ENCODE measurements at regions of chr4 and their contacts with region 1.

Region 1: DNA sequence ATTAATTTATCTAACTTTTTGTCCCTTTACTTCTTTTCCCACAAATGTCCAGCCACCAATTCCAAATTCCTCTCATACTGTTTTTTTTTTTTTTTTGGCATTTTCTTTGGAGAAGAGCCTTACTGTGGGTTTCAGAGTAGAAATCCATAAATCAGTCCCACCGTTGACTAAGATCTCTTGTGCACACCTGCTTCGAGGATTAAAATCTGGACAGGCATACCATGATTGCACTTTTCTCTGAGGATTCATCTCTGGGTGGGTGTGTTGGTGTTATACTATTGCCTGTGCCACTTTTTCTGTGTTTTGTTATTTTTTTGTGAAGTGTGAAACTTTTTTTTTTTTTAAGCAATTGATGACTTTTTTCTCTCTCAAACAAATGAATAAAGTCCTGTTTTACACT is 13.2 kb downstream of the PRDM8 start:
- DNase-seq: no peak
- ATAC-seq: no peak
- H3K4me3 ChIP-seq: no peak overlapping the region
- H3K27ac ChIP-seq: no peak overlapping the region
- H3K4me1 ChIP-seq: no peaks in the 10 kb centered on the region
- H3K27me3 ChIP-seq: no peaks in the 10 kb centered on the region
- CTCF ChIP-seq: no peak

Region 2: DNA sequence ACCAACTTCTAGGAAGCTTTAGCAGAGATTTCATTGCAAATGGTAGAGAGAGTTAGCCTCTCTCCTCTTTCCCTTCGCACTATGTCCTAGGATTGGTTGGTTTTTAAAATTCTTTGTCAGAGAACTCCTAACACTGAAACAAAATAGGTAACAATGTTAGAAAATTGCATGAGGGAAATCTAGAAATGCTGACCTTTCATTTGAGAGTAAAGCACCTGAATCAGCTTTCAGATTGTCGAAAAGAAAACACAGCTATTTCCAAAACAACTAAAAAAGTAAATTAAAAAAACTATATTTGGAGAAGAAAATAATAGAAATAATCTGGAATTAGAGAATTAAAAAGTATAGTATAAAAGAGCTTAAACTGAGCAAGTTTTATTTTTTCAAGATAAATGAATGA is 694.4 kb before region 1 on chr4:
- CTCF ChIA-PET with region 1: no interaction called
- POLR2A ChIA-PET with region 1: interaction called, 11 read pairs
- in situ Hi-C with region 1: no loop called
- intact Hi-C with region 1: no loop called
- DNase-seq: no peak
- ATAC-seq: no peak
- H3K4me3 ChIP-seq: no peak overlapping the region
- H3K27ac ChIP-seq: no peak overlapping the region
- H3K4me1 ChIP-seq: no peaks in the 10 kb centered on the region
- H3K27me3 ChIP-seq: no peaks in the 10 kb centered on the region
- CTCF ChIP-seq: no peak

Region 3: DNA sequence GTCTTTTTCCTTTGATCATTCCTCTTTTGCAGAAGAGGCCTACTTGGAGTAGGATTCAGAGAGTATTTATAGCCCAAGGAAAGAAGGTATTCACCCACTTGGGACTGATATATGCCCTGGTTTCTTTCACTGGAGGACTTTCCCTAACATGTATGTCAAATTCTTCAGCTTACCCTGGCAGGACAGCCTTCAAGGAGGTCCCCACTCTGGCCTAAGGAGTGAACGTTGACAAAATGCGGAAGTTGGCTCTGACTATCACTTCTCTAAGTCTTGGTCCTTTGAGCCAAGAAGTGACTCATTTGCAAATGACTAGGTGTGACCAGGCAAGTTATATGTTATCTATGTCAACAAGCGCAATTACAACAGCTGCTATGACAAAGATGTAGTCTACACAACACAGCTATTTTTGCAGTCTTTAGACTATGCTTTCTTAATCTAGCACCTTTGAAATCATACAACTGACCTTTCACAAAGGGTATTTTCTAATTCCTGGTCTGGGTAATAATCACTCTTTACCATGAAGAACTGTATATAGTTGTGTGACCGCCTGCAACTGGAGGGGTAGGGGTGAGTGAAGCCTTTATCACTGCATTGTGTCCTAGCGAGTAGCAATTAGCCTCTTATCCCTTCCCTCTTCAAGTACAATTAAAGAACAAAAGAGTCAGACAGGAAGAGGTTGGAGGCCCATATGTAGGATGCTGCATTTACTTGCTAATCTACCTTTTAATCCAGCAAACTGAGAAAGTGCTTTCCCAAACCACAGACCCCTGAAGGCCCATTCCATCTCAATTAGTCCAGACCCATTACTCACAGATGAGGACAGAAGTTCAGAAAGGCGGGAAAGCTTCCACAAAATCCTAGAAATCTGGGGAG is 1211.0 kb after region 1 on chr4:
- CTCF ChIA-PET with region 1: no interaction called
- POLR2A ChIA-PET with region 1: no interaction called
- in situ Hi-C with region 1: no loop called
- intact Hi-C with region 1: no loop called
- DNase-seq: no peak
- ATAC-seq: no peak
- H3K4me3 ChIP-seq: no peak overlapping the region
- H3K27ac ChIP-seq: no peak overlapping the region
- H3K4me1 ChIP-seq: no peaks in the 10 kb centered on the region
- H3K27me3 ChIP-seq: no peaks in the 10 kb centered on the region
- CTCF ChIP-seq: no peak